B cell (primary cell): ENCODE measurements at regions of chr13 and their contacts with region 1.

Region 1: GRCh38 chr13:30617315-30618185 is at the start of gene USPL1:
- DNase-seq: peak; percentile 100
- ATAC-seq: peak; percentile 82
- H3K4me3 ChIP-seq: peak within 1 kb of the TSS; percentile 90 to 98 (median 93)
- H3K4me3 Mint-ChIP-seq: no peak within 1 kb of the TSS
- H3K27ac ChIP-seq: peak within 1 kb of the TSS; percentile 98 to 100
- H3K27ac Mint-ChIP-seq: no peak within 1 kb of the TSS
- H3K4me1 ChIP-seq: peaks cover 36 to 38% of the 10 kb centered on the region in 2 donors
- H3K4me1 Mint-ChIP-seq: peaks cover 35% of the 10 kb centered on the region
- H3K27me3 ChIP-seq: no peaks in the 10 kb centered on the region
- H3K27me3 Mint-ChIP-seq: no peaks in the 10 kb centered on the region
- CTCF ChIP-seq: no peak
- total RNA-seq, gene USPL1: 52.2 and 55.8 TPM in 2 replicates

Region 2: GRCh38 chr13:30306762-30307193 is 310.8 kb before region 1 on chr13:
- CTCF ChIA-PET with region 1: interaction called, 3 read pairs
- POLR2A ChIA-PET with region 1: interaction called, 7 read pairs
- intact Hi-C with region 1: loop called (anchors 1 kb)
- DNase-seq: peak; percentile 96
- ATAC-seq: peak; percentile 89
- H3K4me3 ChIP-seq: peak overlapping the region; percentile 70 to 97 (median 83)
- H3K4me3 Mint-ChIP-seq: peak overlapping the region; percentile 85
- H3K27ac ChIP-seq: peak overlapping the region; percentile 71 to 87
- H3K27ac Mint-ChIP-seq: peak overlapping the region; percentile 86
- H3K4me1 ChIP-seq: peaks cover 28 to 45% of the 10 kb centered on the region in 2 donors
- H3K4me1 Mint-ChIP-seq: peaks cover 55% of the 10 kb centered on the region
- H3K27me3 ChIP-seq: no peaks in the 10 kb centered on the region
- H3K27me3 Mint-ChIP-seq: no peaks in the 10 kb centered on the region
- CTCF ChIP-seq: no peak

Region 3: DNA sequence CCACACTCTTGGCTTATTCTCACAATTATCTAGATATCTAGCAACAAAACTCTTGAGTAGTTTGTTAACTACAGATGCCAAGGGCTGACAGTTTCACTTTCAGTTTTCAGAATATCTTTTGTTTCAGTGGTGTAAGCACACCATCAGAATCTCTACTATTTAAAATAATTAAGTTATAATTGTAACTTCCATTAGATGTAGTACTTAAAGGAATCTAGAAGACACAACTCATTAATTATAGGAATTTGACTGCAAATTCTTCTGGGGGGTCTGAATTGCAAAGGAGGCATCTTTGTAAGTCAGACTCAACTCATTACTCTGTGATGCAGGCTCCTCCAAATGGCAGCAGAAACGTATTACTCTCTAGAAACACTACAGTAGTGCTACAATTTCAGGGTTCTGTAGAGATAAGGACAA is 44.7 kb before region 1 on chr13:
- CTCF ChIA-PET with region 1: interaction called, 3 read pairs
- POLR2A ChIA-PET with region 1: interaction called, 4 read pairs
- intact Hi-C with region 1: loop called (anchors 2 kb)
- DNase-seq: peak; percentile 64
- ATAC-seq: peak; percentile 77
- H3K4me3 ChIP-seq: peak overlapping the region in 4 of 5 experiments; percentile 27 to 65 (median 35)
- H3K4me3 Mint-ChIP-seq: peak overlapping the region; percentile 75
- H3K27ac ChIP-seq: peak overlapping the region; percentile 55 to 81
- H3K27ac Mint-ChIP-seq: peak overlapping the region; percentile 68
- H3K4me1 ChIP-seq: peaks cover 5 to 8% of the 10 kb centered on the region in 2 donors
- H3K4me1 Mint-ChIP-seq: peaks cover 26% of the 10 kb centered on the region
- H3K27me3 ChIP-seq: peaks cover 0 to 3% (median 0%) of the 10 kb centered on the region in 4 experiments
- H3K27me3 Mint-ChIP-seq: no peaks in the 10 kb centered on the region
- CTCF ChIP-seq: peak; percentile 28

Region 4: DNA sequence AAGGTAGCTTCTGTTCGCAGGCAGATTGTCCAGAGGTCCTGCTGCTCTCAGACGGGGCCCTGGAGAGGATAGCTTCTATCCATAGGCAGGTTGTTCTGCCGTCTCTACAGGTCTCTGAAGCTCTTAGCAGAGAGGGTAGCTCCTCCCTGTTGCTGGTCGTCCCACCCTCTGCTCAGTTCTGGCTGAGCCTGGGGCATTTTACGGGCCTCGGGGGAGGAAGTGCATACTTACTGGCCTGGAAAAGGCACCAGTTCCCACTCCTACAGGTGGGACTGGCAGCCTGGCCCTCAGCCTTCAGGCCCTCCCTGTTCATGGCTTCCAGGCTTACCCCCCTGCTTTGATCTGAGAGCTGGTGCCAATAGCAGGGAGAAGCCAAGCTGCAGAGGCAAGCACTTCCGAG is 42.4 kb after region 1 on chr13:
- CTCF ChIA-PET with region 1: interaction called, 5 read pairs
- POLR2A ChIA-PET with region 1: interaction called, 25 read pairs
- intact Hi-C with region 1: loop called (anchors 1 kb)
- DNase-seq: no peak
- ATAC-seq: no peak
- H3K4me3 ChIP-seq: peak overlapping the region in 4 of 5 experiments; percentile 14 to 50 (median 34)
- H3K4me3 Mint-ChIP-seq: peak overlapping the region; percentile 83
- H3K27ac ChIP-seq: peak overlapping the region; percentile 78 to 83
- H3K27ac Mint-ChIP-seq: peak overlapping the region; percentile 97
- H3K4me1 ChIP-seq: peaks cover 56 to 60% of the 10 kb centered on the region in 2 donors
- H3K4me1 Mint-ChIP-seq: peaks cover 24% of the 10 kb centered on the region
- H3K27me3 ChIP-seq: no peaks in the 10 kb centered on the region
- H3K27me3 Mint-ChIP-seq: no peaks in the 10 kb centered on the region
- CTCF ChIP-seq: no peak

Region 5: GRCh38 chr13:30739761-30740642 is 122.5 kb after region 1 on chr13:
- CTCF ChIA-PET with region 1: interaction called, 3 read pairs
- POLR2A ChIA-PET with region 1: interaction called, 11 read pairs
- intact Hi-C with region 1: loop called (anchors 1 kb)
- DNase-seq: peak; percentile 55
- ATAC-seq: peak; percentile 3
- H3K4me3 ChIP-seq: peak overlapping the region in 2 of 5 experiments; percentile 0 to 52
- H3K4me3 Mint-ChIP-seq: peak overlapping the region; percentile 84
- H3K27ac ChIP-seq: peak overlapping the region in 1 of 2 donors; percentile 45
- H3K27ac Mint-ChIP-seq: peak overlapping the region; percentile 78
- H3K4me1 ChIP-seq: peaks cover 69 to 82% of the 10 kb centered on the region in 2 donors
- H3K4me1 Mint-ChIP-seq: peaks cover 80% of the 10 kb centered on the region
- H3K27me3 ChIP-seq: no peaks in the 10 kb centered on the region
- H3K27me3 Mint-ChIP-seq: no peaks in the 10 kb centered on the region
- CTCF ChIP-seq: no peak

Region 6: GRCh38 chr13:32315238-32316027 is 1697.9 kb after region 1 on chr13 and contains the starts of genes BRCA2 and ZAR1L:
- CTCF ChIA-PET with region 1: no interaction called
- POLR2A ChIA-PET with region 1: no interaction called
- intact Hi-C with region 1: loop called (anchors 5 kb)
- DNase-seq: peak; percentile 94
- ATAC-seq: peak; percentile 90
- H3K4me3 ChIP-seq: peak within 1 kb of the TSS; percentile 74 to 91 (median 82)
- H3K4me3 Mint-ChIP-seq: peak within 1 kb of the TSS; percentile 91
- H3K27ac ChIP-seq: peak within 1 kb of the TSS; percentile 99 to 100
- H3K27ac Mint-ChIP-seq: peak within 1 kb of the TSS; percentile 99
- H3K4me1 ChIP-seq: peaks cover 7 to 20% of the 10 kb centered on the region in 2 donors
- H3K4me1 Mint-ChIP-seq: peaks cover 15% of the 10 kb centered on the region
- H3K27me3 ChIP-seq: no peaks in the 10 kb centered on the region
- H3K27me3 Mint-ChIP-seq: no peaks in the 10 kb centered on the region
- CTCF ChIP-seq: no peak
- total RNA-seq, gene BRCA2: 6.0 and 7.5 TPM in 2 replicates
- total RNA-seq, gene ZAR1L: not detected in 2 replicates